Motor neuron (in vitro differentiated cells): ENCODE measurements at regions of chr9 and their contacts with region 1.

Region 1: DNA sequence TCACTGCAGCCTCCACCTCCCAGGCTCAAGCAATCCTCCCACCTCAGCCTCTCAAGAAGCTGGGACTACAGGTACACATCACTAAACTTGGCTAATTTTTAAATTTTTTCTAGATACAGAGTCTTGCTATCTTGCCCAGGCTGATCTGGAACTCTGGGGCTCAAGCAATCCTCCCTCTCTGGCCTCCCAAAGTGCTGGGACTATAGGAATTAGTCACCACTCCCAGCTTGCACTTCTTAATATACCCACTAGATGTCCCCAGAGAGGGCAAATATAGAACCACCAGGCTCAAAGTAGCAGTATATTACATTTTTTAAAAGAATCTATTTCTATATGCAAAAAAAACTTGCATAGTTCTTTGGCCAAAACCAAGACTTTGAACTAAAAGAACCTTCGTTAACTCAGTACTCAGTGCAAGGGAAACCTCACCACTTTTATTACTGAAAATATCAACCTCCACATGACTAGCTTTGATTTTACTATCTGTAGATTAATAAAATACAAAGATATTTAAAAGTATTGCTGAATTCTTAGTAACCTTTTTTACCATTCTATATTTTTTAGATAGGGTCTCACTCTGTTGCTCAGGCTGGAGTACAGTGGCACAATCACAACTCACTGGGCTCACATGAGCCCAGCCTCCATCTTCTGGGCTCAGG is 25.8 kb upstream of the HSD17B3 start:
- ATAC-seq: peak in 7 of 8 experiments; percentile 36 to 77 (median 52)
- H3K4me3 ChIP-seq: no peak overlapping the region
- H3K27ac ChIP-seq: no peak overlapping the region
- H3K4me1 ChIP-seq: no peaks in the 10 kb centered on the region

Region 2: GRCh38 chr9:96654443-96655197 is 326.8 kb after region 1 on chr9:
- in situ Hi-C with region 1: loop called in 2 of 9 experiments (anchors 25 kb)
- ATAC-seq: peak; percentile 71 to 82 (median 78)
- H3K4me3 ChIP-seq: peak overlapping the region; percentile 50 to 71 (median 60)
- H3K27ac ChIP-seq: peak overlapping the region; percentile 68 to 80
- H3K4me1 ChIP-seq: no peaks in the 10 kb centered on the region